Head of caudate nucleus (tissue), 42 donors: ENCODE measurements at regions of chr12 and their contacts with region 1.

Region 1: DNA sequence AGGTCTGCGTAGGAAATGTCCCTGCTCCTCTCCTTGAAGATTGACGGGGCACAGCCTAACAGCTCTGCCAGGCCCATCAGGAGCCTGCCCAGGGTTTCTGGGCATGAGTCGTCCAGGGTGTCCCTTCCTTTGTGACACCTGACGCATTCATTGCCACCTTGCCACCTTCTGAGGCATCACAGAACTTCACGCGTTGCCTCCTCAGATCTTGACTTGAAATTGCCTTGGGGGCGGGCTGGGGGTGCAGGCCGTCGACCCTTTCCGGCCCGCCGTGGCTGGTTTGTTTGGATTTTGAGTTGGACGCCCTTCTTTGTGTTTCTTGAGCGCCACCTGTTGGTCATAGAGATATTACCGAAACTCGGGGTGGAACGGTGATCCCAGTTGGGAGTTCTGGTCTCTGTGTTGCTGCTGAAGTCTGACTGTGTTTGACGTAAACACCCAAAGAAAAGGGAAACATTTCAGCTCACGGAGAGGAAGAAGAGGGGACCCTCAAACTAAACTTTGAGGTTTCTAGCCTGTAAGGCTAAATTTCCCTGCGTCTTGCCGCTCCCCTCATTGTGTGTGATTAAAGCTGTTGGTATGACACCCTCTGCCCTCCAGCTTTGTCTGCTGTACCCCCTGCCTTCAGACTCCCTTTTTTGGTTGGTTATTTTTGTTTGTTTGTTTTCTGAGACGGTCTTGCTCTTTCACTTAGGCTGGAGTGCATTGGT is 44.6 kb downstream of the MLXIP start:
- DNase-seq: peak; percentile 42 to 92 (median 77)

Region 2: GRCh38 chr12:122054842-122055520 is 68.2 kb before region 1 on chr12:
- intact Hi-C with region 1: loop called (anchors 2 kb)
- DNase-seq: no peak

Region 3: GRCh38 chr12:122203301-122204166 is 80.3 kb after region 1 on chr12 and contains the start of gene B3GNT4:
- intact Hi-C with region 1: no loop called
- DNase-seq: peak; percentile 55 to 89 (median 78)